ENCODE measurements at regions of chr2 and their contacts with region 1.

Region 1: DNA sequence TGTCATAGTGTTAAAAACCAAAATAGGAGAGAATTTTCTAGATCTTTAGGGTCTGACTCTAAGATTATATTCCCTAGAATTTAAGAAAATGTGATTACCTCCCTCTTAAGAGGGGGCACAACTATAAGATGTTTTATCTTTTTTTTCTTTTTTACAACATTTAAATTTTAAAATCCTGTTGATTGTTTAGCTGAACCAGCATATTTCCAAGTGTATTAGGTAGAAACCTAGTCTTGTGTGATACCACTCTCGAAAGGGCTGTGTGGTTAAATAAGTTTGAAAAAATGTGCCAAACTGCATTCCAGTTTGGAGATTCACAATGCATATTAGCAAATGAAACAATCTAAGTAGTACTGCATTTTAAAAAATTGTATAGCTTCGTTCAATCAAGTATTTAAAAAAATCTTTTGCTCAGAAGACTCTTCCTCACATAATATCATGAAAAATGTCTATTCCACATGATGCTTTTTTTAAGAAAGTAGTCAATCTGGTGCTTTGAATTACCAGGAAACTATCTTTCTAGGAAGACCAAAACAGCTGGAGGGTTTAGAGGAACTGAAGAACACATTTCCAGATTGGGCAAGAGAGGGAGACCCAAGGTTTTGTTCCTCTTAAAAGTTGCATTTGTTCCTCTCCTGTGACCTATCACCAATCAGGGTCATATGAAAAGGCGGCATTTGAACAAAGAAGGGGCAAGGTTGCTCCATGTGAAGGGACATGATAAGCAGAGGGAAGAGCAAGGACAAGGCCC is 98.8 kb downstream of the DPP4 start:
- H3K4me3 Mint-ChIP-seq: peak overlapping the region; percentile 52
- H3K27ac Mint-ChIP-seq: peak overlapping the region; percentile 91
- H3K4me1 Mint-ChIP-seq: peaks cover 29% of the 10 kb centered on the region
- H3K27me3 Mint-ChIP-seq: peaks cover 2% of the 10 kb centered on the region

Region 2: GRCh38 chr2:161961061-161961460 is 14.2 kb before region 1 on chr2:
- intact Hi-C with region 1: loop called (anchors 2 kb)
- H3K4me3 Mint-ChIP-seq: no peak overlapping the region
- H3K27ac Mint-ChIP-seq: peak overlapping the region; percentile 77
- H3K4me1 Mint-ChIP-seq: peaks cover 15% of the 10 kb centered on the region
- H3K27me3 Mint-ChIP-seq: peaks cover 1% of the 10 kb centered on the region

Region 3: GRCh38 chr2:161992526-161992925 is 17.3 kb after region 1 on chr2:
- intact Hi-C with region 1: loop called (anchors 2 kb)
- H3K4me3 Mint-ChIP-seq: peak overlapping the region; percentile 27
- H3K27ac Mint-ChIP-seq: peak overlapping the region; percentile 85
- H3K4me1 Mint-ChIP-seq: peaks cover 30% of the 10 kb centered on the region
- H3K27me3 Mint-ChIP-seq: peaks cover 2% of the 10 kb centered on the region

Region 4: DNA sequence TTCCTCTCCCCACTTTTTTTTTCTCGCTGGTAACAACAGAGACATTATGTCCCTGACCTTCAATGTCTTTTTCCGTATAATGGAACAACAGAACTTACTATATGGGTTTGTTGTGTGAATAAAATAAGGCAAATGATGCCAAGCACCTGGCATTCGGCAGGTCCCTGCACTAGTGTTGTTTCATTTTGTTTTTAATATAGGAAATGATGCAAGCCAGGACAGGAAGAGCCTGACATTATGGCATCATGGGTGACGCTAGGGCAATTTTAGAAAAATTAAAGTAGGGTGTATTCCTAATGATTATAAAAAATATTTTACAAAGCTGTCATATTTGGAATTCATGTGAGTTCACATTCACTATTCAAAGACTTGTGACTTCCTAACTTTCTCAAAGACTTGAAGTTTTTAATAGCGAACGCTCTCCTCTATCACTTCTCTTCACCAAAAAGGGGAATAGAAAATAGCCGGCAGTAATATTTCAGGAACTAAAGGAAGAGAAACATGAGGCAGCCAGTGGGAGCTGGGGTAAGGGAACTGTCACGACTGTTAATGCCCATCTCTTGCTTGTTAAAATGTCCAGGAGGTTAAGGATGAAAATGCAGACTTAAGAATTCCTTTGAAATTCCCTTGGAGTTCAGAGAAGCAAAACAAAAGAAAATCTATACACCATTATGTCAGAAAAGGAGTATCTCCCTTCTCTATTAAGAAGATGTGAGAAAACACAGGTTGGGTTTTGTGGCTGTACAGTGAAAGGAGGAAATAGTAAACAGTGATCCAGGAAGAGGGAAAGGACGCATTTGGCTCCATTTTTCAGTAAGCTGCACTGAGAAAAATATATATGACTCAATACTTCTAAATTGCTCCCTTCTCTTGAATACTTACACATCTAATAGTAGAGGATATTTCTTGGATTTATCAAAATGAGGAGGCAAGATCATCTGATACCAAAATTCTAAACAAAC is 38.6 kb after region 1 on chr2:
- intact Hi-C with region 1: loop called (anchors 5 kb)
- H3K4me3 Mint-ChIP-seq: peak overlapping the region; percentile 66
- H3K27ac Mint-ChIP-seq: peak overlapping the region; percentile 94
- H3K4me1 Mint-ChIP-seq: peaks cover 20% of the 10 kb centered on the region
- H3K27me3 Mint-ChIP-seq: peaks cover 3% of the 10 kb centered on the region

Region 5: DNA sequence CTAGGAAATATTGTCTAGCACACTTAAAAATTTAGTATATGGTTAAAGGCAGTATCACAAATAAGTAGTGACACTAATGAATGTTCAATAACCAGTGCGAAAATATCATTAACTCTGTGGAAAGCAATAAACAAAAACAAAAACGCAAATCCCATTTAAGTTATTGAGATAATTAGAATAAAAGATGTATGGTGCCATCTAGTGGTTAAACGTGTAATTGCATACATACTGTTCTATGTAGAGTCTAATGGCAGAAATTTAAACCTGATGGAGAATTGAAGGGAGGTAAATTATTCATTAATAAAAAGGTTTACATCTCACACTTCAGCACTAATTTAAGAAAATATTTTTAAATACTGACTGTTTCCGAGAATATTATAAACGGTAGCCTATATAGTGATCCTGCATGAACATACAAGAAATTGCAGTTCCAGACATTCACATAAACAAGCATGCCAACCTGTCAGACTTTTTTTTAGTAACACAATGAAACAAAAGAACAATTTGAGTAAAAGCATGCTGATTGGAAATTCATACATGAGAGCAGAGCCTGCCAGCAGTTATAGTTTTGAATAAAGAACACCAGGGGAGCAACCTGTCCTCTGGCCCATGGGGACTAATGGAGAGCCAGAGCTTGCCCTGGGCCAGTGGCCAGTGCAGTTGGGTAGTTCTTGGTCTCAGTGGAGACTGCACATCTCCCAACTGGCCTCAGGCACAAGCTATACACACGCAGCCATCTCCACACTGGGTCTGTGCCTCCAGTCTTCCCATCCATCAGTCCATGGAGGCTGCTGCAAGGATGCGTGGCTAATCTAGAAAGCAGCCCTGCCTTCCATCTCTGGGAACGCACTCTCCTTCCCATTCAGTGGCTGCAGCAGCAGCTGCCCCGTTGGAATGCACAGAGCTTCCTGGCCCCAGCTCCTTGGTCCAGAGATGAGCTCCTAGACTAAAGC is 148.8 kb after region 1 on chr2:
- intact Hi-C with region 1: no loop called
- H3K4me3 Mint-ChIP-seq: no peak overlapping the region
- H3K27ac Mint-ChIP-seq: peak overlapping the region; percentile 57
- H3K4me1 Mint-ChIP-seq: peaks cover 23% of the 10 kb centered on the region
- H3K27me3 Mint-ChIP-seq: no peaks in the 10 kb centered on the region

Region 6: GRCh38 chr2:162318328-162319180 is 343.3 kb after region 1 on chr2 and contains the start of gene IFIH1:
- intact Hi-C with region 1: loop called (anchors 10 kb)
- H3K4me3 Mint-ChIP-seq: peak within 1 kb of the TSS; percentile 89
- H3K27ac Mint-ChIP-seq: peak within 1 kb of the TSS; percentile 100
- H3K4me1 Mint-ChIP-seq: peaks cover 51% of the 10 kb centered on the region
- H3K27me3 Mint-ChIP-seq: no peaks in the 10 kb centered on the region